Activated CD4-positive, alpha-beta T cell treated with anti-CD3 and anti-CD28 coated beads for 36 hours (primary cell): ENCODE measurements at regions of chr17 and their contacts with region 1.

Region 1: DNA sequence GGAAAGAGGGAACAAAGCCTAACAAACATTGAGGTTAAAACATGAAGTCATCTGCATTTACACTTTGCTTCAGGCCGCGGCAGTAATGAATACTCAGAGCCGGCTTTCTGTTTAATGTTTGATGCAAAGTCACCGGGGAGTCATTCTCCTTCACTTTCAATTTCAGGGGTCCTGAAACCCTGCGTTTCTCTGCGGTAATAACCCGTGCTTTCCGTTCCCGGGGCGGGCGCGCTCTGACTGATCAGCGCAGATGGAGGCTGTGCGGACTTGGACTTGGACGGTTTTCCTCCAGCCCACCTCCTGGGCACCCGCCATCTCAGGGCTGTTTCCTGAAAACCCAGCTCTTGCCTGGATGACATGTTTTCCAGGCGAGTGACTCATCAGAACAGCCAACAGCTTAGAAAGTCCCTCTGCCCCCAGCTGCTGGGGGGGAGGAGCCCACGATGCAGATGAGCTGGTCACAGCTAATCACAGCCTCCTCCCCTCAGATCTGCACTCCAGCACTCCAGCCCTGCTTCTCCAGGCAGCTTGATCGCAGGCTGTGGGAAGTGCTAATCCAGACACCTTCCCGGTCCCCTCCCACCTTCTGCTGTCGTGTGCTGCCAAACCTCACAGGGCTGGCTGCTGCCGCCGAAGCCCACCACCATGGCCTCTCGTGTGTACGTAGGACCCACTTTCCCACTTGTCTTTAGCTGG is 158.6 kb upstream of the CHMP6 start:
- DNase-seq: peak; percentile 92
- ATAC-seq: peak; percentile 90
- H3K4me3 Mint-ChIP-seq: peak overlapping the region; percentile 70
- H3K27ac Mint-ChIP-seq: peak overlapping the region; percentile 95
- H3K4me1 Mint-ChIP-seq: peaks cover 44% of the 10 kb centered on the region
- H3K27me3 Mint-ChIP-seq: no peaks in the 10 kb centered on the region

Region 2: GRCh38 chr17:80219013-80219762 is 613.8 kb before region 1 on chr17:
- CTCF ChIA-PET with region 1: no interaction called
- POLR2A ChIA-PET with region 1: no interaction called
- intact Hi-C with region 1: loop called in 1 of 2 experiments (anchors 1 kb)
- DNase-seq: peak; percentile 95
- ATAC-seq: peak; percentile 87
- H3K4me3 Mint-ChIP-seq: peak overlapping the region; percentile 89
- H3K27ac Mint-ChIP-seq: peak overlapping the region; percentile 92
- H3K4me1 Mint-ChIP-seq: peaks cover 27% of the 10 kb centered on the region
- H3K27me3 Mint-ChIP-seq: no peaks in the 10 kb centered on the region

Region 3: DNA sequence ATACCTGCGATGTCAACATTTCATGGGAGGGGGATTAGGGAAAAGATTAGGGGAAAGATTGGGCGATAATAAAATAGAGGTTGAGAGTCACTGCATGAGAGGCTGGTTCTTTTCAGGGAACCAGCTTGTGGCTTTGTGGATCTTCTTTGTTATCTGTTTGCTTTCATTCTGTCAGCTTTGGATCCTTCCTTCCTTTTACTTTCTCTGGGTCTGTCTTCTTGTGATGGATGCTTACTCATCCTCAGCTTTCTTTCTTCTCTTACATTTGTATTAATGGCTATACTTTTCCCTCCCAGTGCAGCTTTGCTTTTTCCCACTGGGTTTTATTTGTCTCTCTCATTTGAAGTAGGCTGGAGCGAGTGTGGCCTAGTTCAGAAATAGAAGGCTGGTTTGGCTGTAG is 241.2 kb before region 1 on chr17:
- CTCF ChIA-PET with region 1: no interaction called
- POLR2A ChIA-PET with region 1: no interaction called
- intact Hi-C with region 1: loop called in 1 of 2 experiments (anchors 1 kb)
- DNase-seq: no peak
- ATAC-seq: peak; percentile 56
- H3K4me3 Mint-ChIP-seq: no peak overlapping the region
- H3K27ac Mint-ChIP-seq: peak overlapping the region; percentile 28
- H3K4me1 Mint-ChIP-seq: peaks cover 68% of the 10 kb centered on the region
- H3K27me3 Mint-ChIP-seq: no peaks in the 10 kb centered on the region

Region 4: DNA sequence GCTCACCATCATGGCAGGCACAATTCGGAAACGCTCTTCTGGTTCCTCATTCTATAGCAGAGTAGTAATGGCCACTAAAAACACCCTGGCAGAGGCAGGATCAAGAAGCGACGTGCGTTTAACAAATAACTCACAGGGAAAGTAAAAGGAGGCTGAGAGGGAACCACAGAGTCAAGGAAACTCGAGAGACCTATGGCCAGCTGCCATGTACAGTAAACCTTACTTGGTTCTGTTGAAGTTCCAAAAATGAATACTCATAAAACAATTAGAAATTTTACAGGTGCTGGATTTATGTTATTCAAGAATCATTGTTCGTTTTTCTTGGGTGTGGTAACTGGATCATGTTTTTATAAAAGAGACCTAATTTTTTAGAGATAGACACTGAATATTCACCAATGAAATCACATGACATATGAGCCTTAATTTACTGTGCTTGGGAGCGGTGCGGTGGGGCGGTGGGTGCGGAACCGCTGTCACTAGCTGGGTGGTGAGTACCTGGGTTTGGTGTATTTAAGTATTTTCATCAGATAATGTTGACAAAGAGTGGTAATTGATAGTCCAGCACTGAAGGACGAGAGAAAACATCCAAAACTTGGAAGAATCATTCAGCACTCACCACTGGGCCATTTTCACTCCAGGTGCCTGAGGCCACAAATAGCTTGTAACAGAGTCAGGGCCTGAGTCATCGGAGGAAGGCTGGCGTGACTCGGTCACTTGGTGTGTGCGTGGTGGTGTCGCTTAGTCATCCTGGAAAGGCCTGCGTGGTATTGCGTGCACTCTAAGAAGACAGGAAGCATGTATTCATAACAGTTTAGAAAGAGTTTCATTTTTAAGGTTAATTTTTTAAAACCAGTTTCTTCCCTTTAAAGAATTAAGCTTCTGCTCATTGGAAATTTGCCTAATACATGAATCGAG is 23.2 kb after region 1 on chr17:
- CTCF ChIA-PET with region 1: interaction called, 9 read pairs
- POLR2A ChIA-PET with region 1: interaction called, 9 read pairs
- intact Hi-C with region 1: loop called (anchors 1 kb)
- DNase-seq: peak; percentile 95
- ATAC-seq: peak; percentile 98
- H3K4me3 Mint-ChIP-seq: peak overlapping the region; percentile 28
- H3K27ac Mint-ChIP-seq: peak overlapping the region; percentile 92
- H3K4me1 Mint-ChIP-seq: peaks cover 57% of the 10 kb centered on the region
- H3K27me3 Mint-ChIP-seq: no peaks in the 10 kb centered on the region

Region 5: GRCh38 chr17:80876950-80877728 is 44.1 kb after region 1 on chr17:
- CTCF ChIA-PET with region 1: interaction called, 5 read pairs
- POLR2A ChIA-PET with region 1: interaction called, 4 read pairs
- intact Hi-C with region 1: loop called (anchors 1 kb)
- DNase-seq: peak; percentile 84
- ATAC-seq: peak; percentile 93
- H3K4me3 Mint-ChIP-seq: peak overlapping the region; percentile 51
- H3K27ac Mint-ChIP-seq: peak overlapping the region; percentile 99
- H3K4me1 Mint-ChIP-seq: peaks cover 68% of the 10 kb centered on the region
- H3K27me3 Mint-ChIP-seq: no peaks in the 10 kb centered on the region